HEK293 (cell line): ENCODE measurements at regions of chr16 and their contacts with region 1.

Region 1: GRCh38 chr16:85086347-85087291 is 25.7 kb downstream of the CIBAR2 start:
- H3K4me3 ChIP-seq: no peak overlapping the region
- H3K27ac ChIP-seq: no peak overlapping the region
- H3K4me1 ChIP-seq: peaks cover 2% of the 10 kb centered on the region; the same call in 1 of the 2 replicates
- CTCF ChIP-seq: peak; percentile 86

Region 2: GRCh38 chr16:85004559-85005205 is 81.9 kb before region 1 on chr16:
- CTCF ChIA-PET with region 1: interaction called, 12 read pairs
- POLR2A ChIA-PET with region 1: no interaction called
- H3K4me3 ChIP-seq: no peak overlapping the region
- H3K27ac ChIP-seq: no peak overlapping the region
- H3K4me1 ChIP-seq: peaks cover 12% of the 10 kb centered on the region; the same call in 1 of the 2 replicates
- CTCF ChIP-seq: no peak

Region 3: GRCh38 chr16:85055503-85056210 is 31.0 kb before region 1 on chr16:
- CTCF ChIA-PET with region 1: interaction called, 23 read pairs
- POLR2A ChIA-PET with region 1: no interaction called
- H3K4me3 ChIP-seq: no peak overlapping the region
- H3K27ac ChIP-seq: no peak overlapping the region; the same call in 1 of the 2 replicates
- H3K4me1 ChIP-seq: peaks cover 4% of the 10 kb centered on the region
- CTCF ChIP-seq: no peak